ENCODE measurements at regions of chr7 and their contacts with region 1.

Region 1: GRCh38 chr7:95690367-95690947 is 81.9 kb upstream of the DYNC1I1 start:
- DNase-seq: no peak
- H3K27ac ChIP-seq: no peak overlapping the region
- CTCF ChIP-seq: peak; percentile 79

Region 2: GRCh38 chr7:95511716-95512260 is 178.7 kb before region 1 on chr7:
- CTCF ChIA-PET with region 1: interaction called, 69 read pairs
- POLR2A ChIA-PET with region 1: no interaction called
- DNase-seq: peak; percentile 55
- H3K27ac ChIP-seq: no peak overlapping the region
- CTCF ChIP-seq: peak; percentile 92

Region 3: GRCh38 chr7:95527033-95527775 is 163.3 kb before region 1 on chr7:
- CTCF ChIA-PET with region 1: interaction called, 27 read pairs
- POLR2A ChIA-PET with region 1: no interaction called
- DNase-seq: peak; percentile 80
- H3K27ac ChIP-seq: no peak overlapping the region
- CTCF ChIP-seq: peak; percentile 88

Region 4: DNA sequence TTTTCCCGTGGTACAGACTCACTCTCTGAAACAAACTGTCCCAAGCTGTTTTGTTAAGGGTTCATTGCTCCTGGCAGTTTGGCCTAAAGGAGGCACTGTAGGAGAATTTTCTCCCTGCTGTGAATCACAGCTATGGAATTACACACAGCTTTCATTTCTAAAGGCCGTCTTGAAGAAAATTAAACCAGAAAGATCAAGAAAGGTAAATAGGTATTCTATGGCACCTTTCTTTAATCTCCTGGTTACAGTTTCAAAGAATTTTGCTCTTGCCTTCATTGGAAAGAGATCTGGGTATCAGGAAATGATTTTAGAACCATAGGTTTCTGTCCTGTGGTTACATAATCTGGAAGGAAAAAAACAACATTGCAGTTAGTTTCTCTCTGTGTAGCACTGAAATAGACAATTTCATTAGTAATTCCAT is 145.4 kb before region 1 on chr7:
- CTCF ChIA-PET with region 1: interaction called, 7 read pairs
- POLR2A ChIA-PET with region 1: interaction called, 13 read pairs
- DNase-seq: peak; percentile 34
- H3K27ac ChIP-seq: no peak overlapping the region
- CTCF ChIP-seq: peak; percentile 52

Region 5: DNA sequence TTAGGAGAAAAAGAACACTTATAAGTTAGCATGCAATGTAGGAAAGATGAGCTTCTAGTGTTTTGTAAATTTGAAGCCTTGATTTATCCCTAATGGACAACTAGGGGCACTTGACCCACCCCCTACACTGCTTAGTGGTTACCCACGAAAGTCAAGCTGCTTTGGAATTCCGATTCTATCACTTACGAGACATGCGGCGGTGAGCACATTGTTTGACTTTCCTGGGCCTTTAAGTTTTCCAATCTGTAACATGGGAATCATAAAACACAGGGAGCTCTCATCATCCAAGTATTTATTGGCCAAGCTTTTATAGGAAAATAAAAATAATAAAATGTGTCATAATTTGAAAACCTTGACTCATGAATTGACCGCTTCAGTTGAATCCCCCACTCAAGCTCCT is 15.4 kb before region 1 on chr7:
- CTCF ChIA-PET with region 1: no interaction called
- POLR2A ChIA-PET with region 1: no interaction called
- DNase-seq: no peak
- H3K27ac ChIP-seq: no peak overlapping the region
- CTCF ChIP-seq: no peak